Activated B cell treated with CpG ODN at 0.5 μM for 24 hours (primary cell): ENCODE measurements at regions of chr12 and their contacts with region 1.

Region 1: GRCh38 chr12:15584366-15585041 is 204.7 kb downstream of the EPS8 start:
- DNase-seq: no peak
- ATAC-seq: peak; percentile 71
- H3K4me3 Mint-ChIP-seq: no peak overlapping the region
- H3K27ac Mint-ChIP-seq: no peak overlapping the region
- H3K4me1 Mint-ChIP-seq: no peaks in the 10 kb centered on the region
- H3K27me3 Mint-ChIP-seq: no peaks in the 10 kb centered on the region
- CTCF ChIP-seq: peak; percentile 83

Region 2: DNA sequence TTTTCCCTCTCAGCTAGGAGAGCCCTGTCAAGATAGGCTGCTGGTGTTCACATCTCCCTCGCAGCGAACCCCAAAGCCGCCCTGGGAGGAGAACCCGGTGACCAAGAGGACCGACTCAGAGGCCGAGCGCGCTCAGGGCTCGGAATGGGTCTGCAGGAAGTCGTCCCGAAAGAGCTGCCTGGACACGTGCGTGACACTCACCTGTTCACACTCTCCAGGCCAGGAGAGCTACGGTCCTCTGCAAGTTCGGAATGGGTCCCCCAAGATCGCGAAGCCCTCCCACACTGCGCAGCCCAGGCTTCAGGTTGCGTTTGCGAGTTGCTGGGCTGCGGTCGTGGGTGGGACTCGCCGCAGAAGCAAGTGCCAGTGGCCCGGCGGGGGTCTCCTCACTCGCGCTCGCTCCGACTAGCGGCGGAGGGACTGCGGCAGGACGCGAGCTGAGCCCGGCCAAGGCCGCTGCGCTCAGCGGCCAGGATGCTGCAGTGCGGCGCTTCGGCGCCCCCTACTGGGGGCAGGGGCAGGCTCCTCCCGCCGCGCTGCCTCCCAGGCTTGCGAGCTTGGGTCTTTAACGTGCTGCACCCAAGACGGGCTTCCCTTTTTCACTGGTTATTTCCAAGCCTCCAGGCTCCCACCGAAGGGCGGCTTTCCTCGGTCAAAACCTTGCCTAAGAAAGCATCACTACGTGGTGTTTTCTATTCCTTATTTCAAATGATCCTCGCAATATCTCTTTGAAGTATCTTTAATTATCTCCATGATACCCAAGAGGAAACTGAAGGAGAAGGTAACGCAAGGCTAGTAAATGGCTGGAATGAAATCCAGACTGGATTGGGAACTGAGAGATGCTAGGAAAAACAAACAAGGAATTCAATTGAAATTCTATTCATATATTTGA is 363.3 kb before region 1 on chr12 and contains the start of gene RERG:
- CTCF ChIA-PET with region 1: no interaction called
- POLR2A ChIA-PET with region 1: no interaction called
- intact Hi-C with region 1: loop called (anchors 5 kb)
- DNase-seq: peak; percentile 72
- ATAC-seq: peak; percentile 99
- H3K4me3 Mint-ChIP-seq: peak within 1 kb of the TSS; percentile 68
- H3K27ac Mint-ChIP-seq: no peak within 1 kb of the TSS
- H3K4me1 Mint-ChIP-seq: peaks cover 7% of the 10 kb centered on the region
- H3K27me3 Mint-ChIP-seq: peaks cover 33% of the 10 kb centered on the region
- CTCF ChIP-seq: peak; percentile 69
- total RNA-seq, gene RERG: not detected in 2 replicates

Region 3: GRCh38 chr12:15276088-15276698 is 308.3 kb before region 1 on chr12:
- CTCF ChIA-PET with region 1: interaction called, 4 read pairs
- POLR2A ChIA-PET with region 1: no interaction called
- intact Hi-C with region 1: loop called (anchors 1 kb)
- DNase-seq: no peak
- ATAC-seq: no peak
- H3K4me3 Mint-ChIP-seq: no peak overlapping the region
- H3K27ac Mint-ChIP-seq: no peak overlapping the region
- H3K4me1 Mint-ChIP-seq: no peaks in the 10 kb centered on the region
- H3K27me3 Mint-ChIP-seq: peaks cover 8% of the 10 kb centered on the region
- CTCF ChIP-seq: no peak

Region 4: DNA sequence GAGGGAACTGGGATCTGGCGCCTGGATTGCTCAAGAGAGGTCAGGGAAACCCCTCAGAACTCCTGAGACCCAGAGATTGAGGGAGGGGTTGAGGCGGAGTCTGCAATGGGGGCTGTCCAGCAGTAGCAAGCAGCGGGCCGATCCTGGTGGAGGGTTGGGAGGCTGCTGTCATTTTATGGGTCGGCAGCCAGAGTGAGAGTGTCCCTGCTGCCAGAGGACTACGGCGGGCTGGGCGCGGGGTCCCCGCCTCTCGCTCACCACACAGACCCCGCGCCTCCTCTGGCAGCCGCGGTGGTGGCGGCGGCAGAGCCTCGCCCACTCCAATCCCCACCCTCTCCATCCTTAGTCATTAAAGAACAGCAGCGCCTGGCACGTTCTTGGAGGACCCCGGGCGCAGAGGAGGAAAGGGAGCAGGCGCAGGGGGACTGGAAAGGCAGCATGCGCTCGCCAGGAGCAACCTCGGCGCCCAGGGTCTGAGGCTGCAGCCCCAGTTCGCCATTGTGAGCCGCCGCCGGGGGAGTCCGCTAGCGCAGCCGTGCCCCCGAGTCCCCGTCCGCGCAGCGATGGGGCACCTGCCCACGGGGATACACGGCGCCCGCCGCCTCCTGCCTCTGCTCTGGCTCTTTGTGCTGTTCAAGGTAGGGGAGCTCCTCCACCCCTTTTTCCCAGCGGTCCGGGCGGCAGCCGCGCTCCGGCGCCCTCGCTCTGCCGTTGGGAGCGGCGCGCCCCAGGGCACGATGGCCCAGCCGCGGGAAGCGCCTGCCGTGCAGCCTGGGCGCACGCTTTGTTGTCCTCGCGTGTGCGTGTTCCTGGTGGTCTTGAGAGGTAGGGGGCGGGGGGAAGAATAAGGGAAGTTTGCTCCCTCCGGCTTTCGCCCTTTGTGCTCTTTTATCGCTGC is 262.1 kb before region 1 on chr12 and contains the start of gene PTPRO:
- CTCF ChIA-PET with region 1: no interaction called
- POLR2A ChIA-PET with region 1: no interaction called
- intact Hi-C with region 1: no loop called
- DNase-seq: no peak
- ATAC-seq: no peak
- H3K4me3 Mint-ChIP-seq: no peak within 1 kb of the TSS
- H3K27ac Mint-ChIP-seq: no peak within 1 kb of the TSS
- H3K4me1 Mint-ChIP-seq: peaks cover 4% of the 10 kb centered on the region
- H3K27me3 Mint-ChIP-seq: peaks cover 31% of the 10 kb centered on the region
- CTCF ChIP-seq: no peak
- total RNA-seq, gene PTPRO: 20.0 and 23.9 TPM in 2 replicates

Region 5: GRCh38 chr12:15411842-15412241 is 172.7 kb before region 1 on chr12:
- CTCF ChIA-PET with region 1: no interaction called
- POLR2A ChIA-PET with region 1: no interaction called
- intact Hi-C with region 1: no loop called
- DNase-seq: no peak
- ATAC-seq: no peak
- H3K4me3 Mint-ChIP-seq: no peak overlapping the region
- H3K27ac Mint-ChIP-seq: no peak overlapping the region
- H3K4me1 Mint-ChIP-seq: peaks cover 8% of the 10 kb centered on the region
- H3K27me3 Mint-ChIP-seq: peaks cover 2% of the 10 kb centered on the region
- CTCF ChIP-seq: no peak

Region 6: GRCh38 chr12:15532364-15532977 is 52.0 kb before region 1 on chr12:
- CTCF ChIA-PET with region 1: interaction called, 480 read pairs
- POLR2A ChIA-PET with region 1: interaction called, 16 read pairs
- intact Hi-C with region 1: loop called (anchors 1 kb)
- DNase-seq: no peak
- ATAC-seq: peak; percentile 85
- H3K4me3 Mint-ChIP-seq: no peak overlapping the region
- H3K27ac Mint-ChIP-seq: no peak overlapping the region
- H3K4me1 Mint-ChIP-seq: peaks cover 8% of the 10 kb centered on the region
- H3K27me3 Mint-ChIP-seq: no peaks in the 10 kb centered on the region
- CTCF ChIP-seq: peak; percentile 84

Region 7: GRCh38 chr12:15556411-15557102 is 27.9 kb before region 1 on chr12:
- CTCF ChIA-PET with region 1: interaction called, 17 read pairs
- POLR2A ChIA-PET with region 1: no interaction called
- intact Hi-C with region 1: no loop called
- DNase-seq: no peak
- ATAC-seq: no peak
- H3K4me3 Mint-ChIP-seq: no peak overlapping the region
- H3K27ac Mint-ChIP-seq: no peak overlapping the region
- H3K4me1 Mint-ChIP-seq: peaks cover 2% of the 10 kb centered on the region
- H3K27me3 Mint-ChIP-seq: no peaks in the 10 kb centered on the region
- CTCF ChIP-seq: no peak

Region 8: DNA sequence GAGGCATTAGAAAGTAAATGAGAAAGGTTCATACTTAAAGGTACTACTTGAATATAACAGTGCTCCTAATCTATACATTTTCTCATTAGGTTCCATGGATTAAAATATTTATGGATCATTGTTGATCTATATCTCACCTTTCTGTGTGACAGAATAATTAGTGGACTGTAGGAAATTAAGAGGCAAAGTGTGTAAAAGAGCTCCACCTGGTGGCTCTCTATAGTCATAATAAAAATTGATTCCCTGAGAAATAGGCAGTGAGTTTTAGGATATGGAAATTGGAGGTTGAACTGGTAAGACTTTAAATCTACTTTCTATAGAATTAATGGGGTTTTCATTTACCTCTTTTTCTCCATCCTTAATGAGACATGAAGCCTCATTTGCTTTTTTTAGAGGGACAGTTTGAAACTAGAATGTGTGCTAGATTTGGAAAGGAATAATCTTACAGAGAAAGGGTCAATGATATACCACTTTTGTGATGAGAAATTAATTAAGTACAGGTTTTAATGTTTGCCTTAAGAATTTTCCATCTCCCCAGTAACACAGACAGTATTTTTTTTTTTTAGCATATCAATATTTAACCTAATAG is 314.9 kb after region 1 on chr12:
- CTCF ChIA-PET with region 1: interaction called, 24 read pairs
- POLR2A ChIA-PET with region 1: no interaction called
- intact Hi-C with region 1: no loop called
- DNase-seq: no peak
- ATAC-seq: peak; percentile 57
- H3K4me3 Mint-ChIP-seq: no peak overlapping the region
- H3K27ac Mint-ChIP-seq: no peak overlapping the region
- H3K4me1 Mint-ChIP-seq: peaks cover 5% of the 10 kb centered on the region
- H3K27me3 Mint-ChIP-seq: no peaks in the 10 kb centered on the region
- CTCF ChIP-seq: no peak